ENCODE measurements at regions of chr11 and their contacts with region 1.

Region 1: DNA sequence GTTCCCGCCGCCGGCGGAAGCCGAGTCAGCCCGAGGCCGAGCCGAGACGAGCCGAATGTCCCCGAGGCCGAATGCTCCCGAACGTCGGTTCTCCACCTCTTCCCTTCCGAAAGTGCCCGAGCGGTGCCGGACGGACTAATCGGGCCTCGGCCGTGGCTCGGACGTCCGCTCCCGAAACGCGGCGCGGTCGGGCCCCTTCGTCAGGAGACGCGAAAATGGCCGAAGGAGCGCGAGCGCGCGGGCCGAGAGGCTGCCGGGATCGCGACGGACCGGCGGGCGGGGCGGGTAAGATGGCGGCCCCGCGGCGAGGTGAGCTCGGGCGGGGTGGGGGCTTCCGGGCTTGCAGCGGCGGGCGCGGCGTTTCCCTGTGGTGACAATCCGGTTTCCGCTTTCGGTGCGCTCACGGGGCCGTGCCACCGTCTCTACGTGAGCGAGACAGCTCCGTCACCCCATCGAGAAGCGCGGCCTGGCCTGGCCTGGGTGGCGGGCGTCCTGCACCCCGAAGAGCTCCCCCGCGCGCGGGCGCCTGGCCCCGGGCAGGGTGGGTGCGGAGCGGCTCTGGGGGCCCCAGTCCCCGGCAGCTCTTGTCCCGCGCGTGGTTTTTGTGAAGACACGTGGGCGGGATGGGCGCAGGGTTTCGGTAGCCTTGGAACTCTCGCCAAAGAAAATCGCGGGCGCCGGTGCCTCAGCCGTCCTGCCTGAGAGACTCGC is at the start of gene TMEM80:
- DNase-seq: peak; percentile 99
- ATAC-seq: peak; percentile 81
- H3K4me3 Mint-ChIP-seq: peak within 1 kb of the TSS; percentile 84
- H3K27ac Mint-ChIP-seq: peak within 1 kb of the TSS; percentile 94
- H3K4me1 Mint-ChIP-seq: peaks cover 51% of the 10 kb centered on the region
- H3K27me3 Mint-ChIP-seq: no peaks in the 10 kb centered on the region
- total RNA-seq, gene TMEM80: 11.4 to 11.9 TPM

Region 2: DNA sequence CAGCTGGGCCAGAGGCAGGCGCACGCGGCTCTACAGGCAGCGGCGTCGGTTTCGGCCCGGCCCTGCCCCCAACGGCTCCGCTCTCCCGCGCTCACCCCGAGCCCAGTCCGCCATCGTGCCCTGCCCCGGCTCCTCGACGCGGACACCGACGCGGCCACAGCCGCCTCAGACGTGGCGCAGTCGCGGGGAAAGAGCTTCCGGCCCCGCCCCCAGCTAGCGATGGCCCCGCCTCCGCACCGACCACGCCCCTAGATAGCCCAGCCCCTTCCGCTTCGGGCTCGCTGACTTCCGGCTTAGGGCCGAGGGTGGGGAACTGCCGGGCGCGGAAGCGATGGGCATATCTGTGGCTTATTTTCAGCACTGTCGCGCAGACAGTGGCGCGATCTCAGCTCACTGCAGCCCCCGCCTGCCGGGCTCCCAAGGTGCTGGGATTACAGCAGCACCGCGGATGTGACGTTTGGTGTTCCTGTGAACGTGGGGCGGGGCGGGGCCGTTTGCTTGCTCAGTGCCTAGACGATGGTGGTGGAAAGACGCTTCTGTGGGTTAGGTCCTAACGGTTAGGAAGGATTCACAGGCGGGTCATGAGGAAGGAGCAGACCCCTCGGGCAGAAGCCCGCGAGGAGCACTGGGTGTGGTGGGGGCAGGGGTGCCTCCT is 488.4 kb before region 1 on chr11 and contains the starts of genes BET1L and RIC8A:
- CTCF ChIA-PET with region 1: no interaction called
- POLR2A ChIA-PET with region 1: no interaction called
- intact Hi-C with region 1: loop called in 1 of 2 experiments (anchors 1 kb)
- DNase-seq: peak; percentile 99
- ATAC-seq: peak; percentile 89
- H3K4me3 Mint-ChIP-seq: peak within 1 kb of the TSS; percentile 94
- H3K27ac Mint-ChIP-seq: peak within 1 kb of the TSS; percentile 99
- H3K4me1 Mint-ChIP-seq: peaks cover 56% of the 10 kb centered on the region
- H3K27me3 Mint-ChIP-seq: no peaks in the 10 kb centered on the region
- total RNA-seq, gene BET1L: 45.5 to 49.4 TPM
- total RNA-seq, gene RIC8A: 104 to 124 TPM

Region 3: GRCh38 chr11:518463-519250 is 177.0 kb before region 1 on chr11:
- CTCF ChIA-PET with region 1: interaction called, 3 read pairs
- POLR2A ChIA-PET with region 1: no interaction called
- intact Hi-C with region 1: loop called in 1 of 2 experiments (anchors 1 kb)
- DNase-seq: peak; percentile 94
- ATAC-seq: peak; percentile 95
- H3K4me3 Mint-ChIP-seq: peak overlapping the region; percentile 67
- H3K27ac Mint-ChIP-seq: peak overlapping the region; percentile 85
- H3K4me1 Mint-ChIP-seq: peaks cover 3% of the 10 kb centered on the region
- H3K27me3 Mint-ChIP-seq: no peaks in the 10 kb centered on the region

Region 4: GRCh38 chr11:575996-576768 is 119.5 kb before region 1 on chr11 and contains the start of gene PHRF1:
- CTCF ChIA-PET with region 1: no interaction called
- POLR2A ChIA-PET with region 1: interaction called, 4 read pairs
- intact Hi-C with region 1: loop called in 1 of 2 experiments (anchors 1 kb)
- DNase-seq: peak; percentile 98
- ATAC-seq: peak; percentile 89
- H3K4me3 Mint-ChIP-seq: peak within 1 kb of the TSS; percentile 86
- H3K27ac Mint-ChIP-seq: peak within 1 kb of the TSS; percentile 98
- H3K4me1 Mint-ChIP-seq: peaks cover 49% of the 10 kb centered on the region
- H3K27me3 Mint-ChIP-seq: peaks cover 10% of the 10 kb centered on the region
- total RNA-seq, gene PHRF1: 40.0 to 44.5 TPM

Region 5: GRCh38 chr11:742198-742546 is 46.5 kb after region 1 on chr11:
- CTCF ChIA-PET with region 1: no interaction called
- POLR2A ChIA-PET with region 1: no interaction called
- intact Hi-C with region 1: loop called (anchors 1 to 5 kb)
- DNase-seq: no peak
- ATAC-seq: no peak
- H3K4me3 Mint-ChIP-seq: no peak overlapping the region
- H3K27ac Mint-ChIP-seq: no peak overlapping the region
- H3K4me1 Mint-ChIP-seq: peaks cover 13% of the 10 kb centered on the region
- H3K27me3 Mint-ChIP-seq: no peaks in the 10 kb centered on the region

Region 6: GRCh38 chr11:798093-798713 is 102.5 kb after region 1 on chr11 and contains the start of gene SLC25A22:
- CTCF ChIA-PET with region 1: no interaction called
- POLR2A ChIA-PET with region 1: no interaction called
- intact Hi-C with region 1: loop called in 1 of 2 experiments (anchors 1 kb)
- DNase-seq: peak; percentile 92
- ATAC-seq: peak; percentile 63
- H3K4me3 Mint-ChIP-seq: peak within 1 kb of the TSS; percentile 79
- H3K27ac Mint-ChIP-seq: peak within 1 kb of the TSS; percentile 67
- H3K4me1 Mint-ChIP-seq: peaks cover 13% of the 10 kb centered on the region
- H3K27me3 Mint-ChIP-seq: no peaks in the 10 kb centered on the region
- total RNA-seq, gene SLC25A22: 33.9 to 36.6 TPM

Region 7: GRCh38 chr11:1382831-1383607 is 687.3 kb after region 1 on chr11:
- CTCF ChIA-PET with region 1: interaction called, 3 read pairs
- POLR2A ChIA-PET with region 1: no interaction called
- intact Hi-C with region 1: loop called in 1 of 2 experiments (anchors 2 kb)
- DNase-seq: peak; percentile 92
- ATAC-seq: peak; percentile 82
- H3K4me3 Mint-ChIP-seq: peak overlapping the region; percentile 66
- H3K27ac Mint-ChIP-seq: peak overlapping the region; percentile 83
- H3K4me1 Mint-ChIP-seq: peaks cover 16% of the 10 kb centered on the region
- H3K27me3 Mint-ChIP-seq: no peaks in the 10 kb centered on the region

Measured in activated CD4-positive, alpha-beta T cell treated with anti-CD3 and anti-CD28 coated beads for 36 hours (primary cell).